GM10248 (cell line): ENCODE measurements at regions of chr1 and their contacts with region 1.

Region 1: GRCh38 chr1:156480411-156481192 is 20.0 kb downstream of the MEF2D start:
- DNase-seq: peak; percentile 87
- CTCF ChIP-seq: peak; percentile 86

Region 2: DNA sequence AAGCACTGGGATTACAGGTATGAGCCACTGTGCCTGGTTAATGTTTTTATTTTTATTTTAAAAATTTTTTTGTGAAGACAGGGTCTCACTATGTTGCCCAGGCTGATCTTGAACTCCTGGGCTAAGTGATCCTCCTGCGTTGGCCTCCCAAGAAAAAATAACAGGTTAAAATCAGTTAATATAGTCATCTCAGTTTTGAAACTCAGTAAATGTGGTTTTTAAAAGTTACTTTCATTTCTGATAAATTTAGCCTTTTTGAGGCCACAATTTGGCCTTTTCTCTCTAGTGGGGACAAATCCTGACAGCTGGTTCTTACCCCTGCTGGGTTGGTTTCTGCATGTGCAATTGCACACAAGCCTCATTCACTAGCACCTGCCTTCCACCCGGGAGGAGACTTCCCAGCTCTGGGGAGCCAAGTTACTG is 254.5 kb before region 1 on chr1:
- CTCF ChIA-PET with region 1: no interaction called
- POLR2A ChIA-PET with region 1: no interaction called
- DNase-seq: peak; percentile 75
- CTCF ChIP-seq: no peak

Region 3: DNA sequence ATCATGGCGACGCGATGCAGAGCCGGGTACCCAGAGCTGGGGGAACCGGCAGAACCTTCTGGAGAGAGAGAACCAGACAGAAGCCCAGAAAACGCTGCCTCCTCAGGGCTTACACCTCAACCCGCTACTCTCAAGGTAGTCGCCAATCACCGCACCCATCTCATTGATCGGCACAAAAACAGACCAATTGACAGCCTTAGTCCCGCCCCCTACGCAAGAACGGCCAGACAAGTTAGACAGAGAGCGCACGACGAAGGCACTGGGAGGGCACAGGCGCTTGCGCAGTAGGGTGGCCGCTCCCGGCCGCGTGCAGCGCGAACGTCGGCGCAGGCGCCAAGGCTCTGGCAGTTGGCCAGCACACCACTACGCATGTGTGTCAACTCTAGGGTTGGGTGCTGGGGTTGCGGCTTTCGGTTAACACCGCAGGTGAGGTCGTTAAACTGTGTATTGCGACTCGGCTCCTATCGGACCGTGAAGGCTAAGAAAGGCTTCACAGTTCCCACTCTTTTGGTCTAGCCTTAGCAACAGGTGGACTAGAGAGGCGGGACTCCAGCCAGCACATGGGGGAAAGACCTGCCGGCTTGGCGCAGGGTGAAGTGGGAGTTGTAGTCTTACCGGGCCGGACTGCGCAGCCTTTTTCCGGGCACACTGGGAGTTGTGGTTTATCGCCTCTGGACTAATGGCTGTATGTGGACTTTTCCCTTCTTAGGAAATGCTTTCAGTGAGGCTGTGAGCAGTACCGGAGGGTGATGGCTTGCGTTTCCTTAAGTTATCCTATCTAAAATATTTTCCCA is 142.2 kb before region 1 on chr1 and contains the starts of genes CCT3 and TSACC:
- CTCF ChIA-PET with region 1: no interaction called
- POLR2A ChIA-PET with region 1: no interaction called
- DNase-seq: peak; percentile 98
- CTCF ChIP-seq: no peak

Region 4: DNA sequence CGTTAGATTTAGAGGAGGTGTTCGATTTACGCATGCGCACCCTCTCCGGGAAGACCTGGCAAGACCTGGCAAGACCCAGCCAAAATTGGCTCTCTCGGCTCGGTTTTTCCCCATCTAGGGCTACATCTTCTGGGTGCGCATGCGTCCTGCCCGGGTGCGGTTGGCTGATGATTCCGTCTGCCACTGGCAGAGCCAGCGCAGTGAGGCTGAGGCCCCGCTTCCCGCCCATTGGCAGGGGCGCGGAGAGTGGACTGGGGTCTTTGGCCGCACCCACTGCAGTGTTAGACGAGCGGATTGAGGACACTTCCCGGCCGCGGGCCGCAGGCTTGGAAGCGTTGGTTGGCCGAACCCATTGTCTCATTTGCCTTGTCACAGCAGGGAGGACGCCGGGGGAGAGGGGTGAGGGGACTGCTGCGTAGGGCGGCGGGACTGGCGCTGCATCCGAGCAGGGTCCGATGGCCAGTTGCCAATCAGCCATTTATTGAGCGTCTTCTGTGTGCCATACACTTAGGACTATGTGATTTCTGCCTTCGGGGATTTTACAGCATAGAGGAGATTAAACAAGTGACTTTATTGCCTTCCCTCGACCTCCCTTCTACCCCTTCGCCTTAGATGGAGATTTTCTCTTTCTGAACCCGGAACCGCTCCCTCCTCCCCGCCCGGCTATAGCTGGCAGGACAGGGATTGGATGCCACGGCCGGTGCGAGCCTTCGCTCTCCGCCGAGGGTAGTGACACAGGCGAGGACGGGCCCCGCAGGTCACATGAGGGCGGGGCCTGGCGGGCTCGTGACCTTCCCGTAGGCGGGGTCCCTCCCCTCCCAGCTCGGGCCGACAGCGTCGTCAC is 23.8 kb before region 1 on chr1:
- CTCF ChIA-PET with region 1: interaction called, 42 read pairs
- POLR2A ChIA-PET with region 1: interaction called, 5 read pairs
- DNase-seq: peak; percentile 98
- CTCF ChIP-seq: no peak

Region 5: GRCh38 chr1:156500797-156501499 is 20.3 kb after region 1 on chr1:
- CTCF ChIA-PET with region 1: interaction called, 373 read pairs
- POLR2A ChIA-PET with region 1: interaction called, 15 read pairs
- DNase-seq: peak; percentile 94
- CTCF ChIP-seq: peak; percentile 77

Region 6: DNA sequence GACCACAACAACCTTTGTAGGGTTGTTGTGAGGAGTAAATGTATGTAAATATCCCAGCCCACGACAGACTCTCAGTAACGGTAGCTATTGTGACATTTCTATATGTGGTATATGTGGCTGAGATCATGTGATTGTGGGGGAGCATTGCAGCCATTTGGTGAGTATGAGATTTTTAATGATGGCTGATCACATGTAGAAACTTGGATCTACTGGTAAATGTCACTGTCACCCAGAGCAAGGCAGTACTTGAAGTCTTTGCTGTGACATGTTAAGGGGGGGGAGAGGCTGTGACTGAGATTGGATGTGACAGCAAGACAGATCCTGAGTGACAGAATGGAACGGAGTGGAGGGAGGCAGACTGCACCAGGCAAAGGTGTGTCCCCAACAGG is 43.9 kb after region 1 on chr1:
- CTCF ChIA-PET with region 1: interaction called, 13 read pairs
- POLR2A ChIA-PET with region 1: no interaction called
- DNase-seq: peak; percentile 44
- CTCF ChIP-seq: no peak

Region 7: DNA sequence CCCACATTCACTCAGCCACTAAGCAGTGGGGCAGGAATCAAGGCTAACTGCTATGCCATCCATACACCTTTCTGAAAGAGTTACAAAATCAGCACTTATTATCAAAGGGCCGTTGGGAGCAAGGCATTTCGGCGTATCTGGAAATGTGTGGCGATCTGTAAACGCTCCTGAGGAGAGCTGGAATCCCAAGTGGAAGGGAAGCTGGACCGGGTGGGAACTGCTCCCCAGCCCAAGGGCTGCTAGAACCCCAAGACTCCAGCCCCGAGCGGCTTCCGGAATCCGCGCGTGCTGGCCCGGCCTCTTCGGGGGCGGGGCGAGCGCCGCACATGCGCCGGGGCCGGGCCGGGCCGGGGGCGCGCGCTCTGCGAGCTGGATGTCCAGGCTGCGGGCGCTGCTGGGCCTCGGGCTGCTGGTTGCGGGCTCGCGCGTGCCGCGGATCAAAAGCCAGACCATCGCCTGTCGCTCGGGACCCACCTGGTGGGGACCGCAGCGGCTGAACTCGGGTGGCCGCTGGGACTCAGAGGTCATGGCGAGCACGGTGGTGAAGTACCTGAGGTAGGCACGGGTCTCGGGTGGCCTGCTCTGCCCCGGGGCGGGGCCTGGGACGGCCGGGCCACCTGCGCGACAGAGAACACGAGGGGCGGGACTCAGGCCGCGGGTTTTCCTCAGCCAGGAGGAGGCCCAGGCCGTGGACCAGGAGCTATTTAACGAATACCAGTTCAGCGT is 111.0 kb after region 1 on chr1 and contains the start of gene NAXE:
- CTCF ChIA-PET with region 1: interaction called, 13 read pairs
- POLR2A ChIA-PET with region 1: no interaction called
- DNase-seq: peak; percentile 89
- CTCF ChIP-seq: no peak